Activated CD4-positive, alpha-beta T cell treated with anti-CD3 and anti-CD28 coated beads for 36 hours (primary cell): ENCODE measurements at regions of chr3 and their contacts with region 1.

Region 1: GRCh38 chr3:56862352-56863074 is 60.8 kb upstream of the ARHGEF3 start:
- DNase-seq: peak; percentile 41
- ATAC-seq: peak; percentile 70
- H3K4me3 Mint-ChIP-seq: peak overlapping the region; percentile 32
- H3K27ac Mint-ChIP-seq: peak overlapping the region; percentile 85
- H3K4me1 Mint-ChIP-seq: peaks cover 80% of the 10 kb centered on the region
- H3K27me3 Mint-ChIP-seq: no peaks in the 10 kb centered on the region

Region 2: DNA sequence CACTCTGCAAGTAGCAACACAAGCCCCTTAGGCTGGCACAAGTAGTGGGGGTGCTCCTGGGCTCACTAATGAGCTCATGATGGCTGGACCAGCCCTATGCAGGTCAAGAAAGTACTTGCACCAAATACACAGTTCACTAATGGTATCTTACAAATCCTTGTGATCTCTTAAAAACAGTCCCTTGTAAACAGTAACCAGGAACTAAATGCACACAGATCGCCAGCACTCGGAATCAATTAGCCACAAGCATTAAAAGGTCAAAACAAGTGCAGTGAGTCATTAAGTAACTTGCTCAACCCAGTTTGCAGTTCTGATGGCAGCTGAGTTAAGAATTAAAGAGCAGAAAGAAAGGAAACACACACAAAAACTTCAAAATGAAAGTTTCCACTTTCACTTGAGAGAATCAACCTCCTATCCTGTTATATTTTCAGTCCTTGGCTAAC is 104.0 kb before region 1 on chr3:
- CTCF ChIA-PET with region 1: interaction called, 3 read pairs
- POLR2A ChIA-PET with region 1: no interaction called
- intact Hi-C with region 1: loop called (anchors 1 to 5 kb)
- DNase-seq: peak; percentile 66
- ATAC-seq: peak; percentile 83
- H3K4me3 Mint-ChIP-seq: peak overlapping the region; percentile 63
- H3K27ac Mint-ChIP-seq: peak overlapping the region; percentile 83
- H3K4me1 Mint-ChIP-seq: peaks cover 82% of the 10 kb centered on the region
- H3K27me3 Mint-ChIP-seq: no peaks in the 10 kb centered on the region

Region 3: GRCh38 chr3:56878074-56878473 is 15.6 kb after region 1 on chr3:
- CTCF ChIA-PET with region 1: interaction called, 12 read pairs
- POLR2A ChIA-PET with region 1: interaction called, 6 read pairs
- intact Hi-C with region 1: loop called (anchors 1 kb)
- DNase-seq: peak; percentile 79
- ATAC-seq: peak; percentile 87
- H3K4me3 Mint-ChIP-seq: peak overlapping the region; percentile 64
- H3K27ac Mint-ChIP-seq: peak overlapping the region; percentile 94
- H3K4me1 Mint-ChIP-seq: peaks cover 90% of the 10 kb centered on the region
- H3K27me3 Mint-ChIP-seq: no peaks in the 10 kb centered on the region

Region 4: DNA sequence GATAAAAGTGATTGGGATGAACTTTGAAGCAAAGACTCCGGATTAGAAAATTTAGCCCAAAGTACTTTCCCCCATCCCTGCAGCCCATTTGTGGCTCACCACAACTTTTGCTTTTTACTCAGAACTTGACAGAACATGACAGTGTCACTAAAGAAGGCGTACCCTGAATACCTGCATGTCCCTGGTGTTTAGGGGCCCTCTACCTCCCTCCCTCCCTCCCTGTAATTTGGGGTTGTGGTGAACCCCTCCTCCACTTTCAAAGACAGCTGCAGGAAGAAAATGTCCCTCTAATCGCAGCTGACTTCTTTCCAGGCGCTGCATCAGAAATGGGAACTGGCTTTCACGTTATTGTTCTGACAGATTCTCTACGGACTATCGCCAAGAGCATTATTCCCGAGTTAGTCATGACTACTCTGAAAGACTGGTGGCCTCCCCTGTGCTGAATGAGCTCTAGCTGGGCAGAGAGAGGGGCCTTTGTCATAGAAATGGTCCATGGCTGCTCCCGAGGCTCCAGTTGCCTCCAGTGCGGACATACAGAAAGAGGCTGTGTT is 32.4 kb after region 1 on chr3:
- CTCF ChIA-PET with region 1: interaction called, 5 read pairs
- POLR2A ChIA-PET with region 1: no interaction called
- intact Hi-C with region 1: loop called in 1 of 2 experiments (anchors 2 kb)
- DNase-seq: peak; percentile 60
- ATAC-seq: peak; percentile 72
- H3K4me3 Mint-ChIP-seq: peak overlapping the region; percentile 29
- H3K27ac Mint-ChIP-seq: no peak overlapping the region
- H3K4me1 Mint-ChIP-seq: peaks cover 66% of the 10 kb centered on the region
- H3K27me3 Mint-ChIP-seq: no peaks in the 10 kb centered on the region

Region 5: GRCh38 chr3:56980798-56981390 is 118.4 kb after region 1 on chr3:
- CTCF ChIA-PET with region 1: interaction called, 3 read pairs
- POLR2A ChIA-PET with region 1: no interaction called
- intact Hi-C with region 1: loop called (anchors 1 kb)
- DNase-seq: peak; percentile 82
- ATAC-seq: peak; percentile 95
- H3K4me3 Mint-ChIP-seq: no peak overlapping the region
- H3K27ac Mint-ChIP-seq: peak overlapping the region; percentile 78
- H3K4me1 Mint-ChIP-seq: peaks cover 23% of the 10 kb centered on the region
- H3K27me3 Mint-ChIP-seq: no peaks in the 10 kb centered on the region